Activated CD4-positive, alpha-beta memory T cell treated with anti-CD3 and anti-CD28 coated beads for 36 hours (primary cell): ENCODE measurements at regions of chr1 and their contacts with region 1.

Region 1: DNA sequence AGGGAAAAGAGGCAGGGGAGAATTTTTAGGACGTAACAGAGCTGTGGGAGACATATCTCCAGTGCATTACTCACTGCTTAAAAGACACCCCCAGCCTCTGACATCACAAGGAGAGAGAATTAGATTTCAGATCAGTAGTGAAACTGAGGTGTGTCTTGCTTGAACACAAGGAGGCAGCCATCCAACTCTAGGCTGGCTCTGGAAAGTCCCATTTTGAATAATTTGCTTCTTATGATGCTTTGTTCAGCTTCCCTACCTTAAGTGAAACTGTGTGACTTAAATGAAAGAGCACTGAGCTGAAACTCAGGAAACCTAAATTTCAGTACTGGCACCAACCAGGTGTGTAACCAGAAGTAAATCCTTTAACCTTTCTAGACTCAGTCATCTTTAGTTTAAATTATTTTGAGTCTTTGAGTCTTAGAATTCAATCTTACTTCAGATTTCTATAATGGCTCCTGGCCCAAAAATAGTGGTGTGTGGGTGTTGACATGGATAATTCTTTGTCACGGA is 251.6 kb upstream of the SGIP1 start:
- DNase-seq: peak; percentile 80
- H3K4me3 Mint-ChIP-seq: no peak overlapping the region
- H3K27ac Mint-ChIP-seq: peak overlapping the region; percentile 76
- H3K4me1 Mint-ChIP-seq: peaks cover 87% of the 10 kb centered on the region
- H3K27me3 Mint-ChIP-seq: no peaks in the 10 kb centered on the region

Region 2: GRCh38 chr1:66258404-66259105 is 23.8 kb before region 1 on chr1:
- CTCF ChIA-PET with region 1: interaction called, 11 read pairs
- POLR2A ChIA-PET with region 1: interaction called, 9 read pairs
- intact Hi-C with region 1: loop called (anchors 1 kb)
- DNase-seq: no peak
- H3K4me3 Mint-ChIP-seq: no peak overlapping the region
- H3K27ac Mint-ChIP-seq: peak overlapping the region; percentile 64
- H3K4me1 Mint-ChIP-seq: peaks cover 85% of the 10 kb centered on the region
- H3K27me3 Mint-ChIP-seq: no peaks in the 10 kb centered on the region

Region 3: GRCh38 chr1:66300972-66301451 is 18.6 kb after region 1 on chr1:
- CTCF ChIA-PET with region 1: no interaction called
- POLR2A ChIA-PET with region 1: interaction called, 6 read pairs
- intact Hi-C with region 1: loop called (anchors 1 kb)
- DNase-seq: peak; percentile 60
- H3K4me3 Mint-ChIP-seq: peak overlapping the region; percentile 65
- H3K27ac Mint-ChIP-seq: peak overlapping the region; percentile 77
- H3K4me1 Mint-ChIP-seq: peaks cover 50% of the 10 kb centered on the region
- H3K27me3 Mint-ChIP-seq: no peaks in the 10 kb centered on the region

Region 4: GRCh38 chr1:66380452-66381212 is 98.2 kb after region 1 on chr1:
- CTCF ChIA-PET with region 1: no interaction called
- POLR2A ChIA-PET with region 1: no interaction called
- intact Hi-C with region 1: no loop called
- DNase-seq: peak; percentile 62
- H3K4me3 Mint-ChIP-seq: no peak overlapping the region
- H3K27ac Mint-ChIP-seq: peak overlapping the region; percentile 1
- H3K4me1 Mint-ChIP-seq: peaks cover 53% of the 10 kb centered on the region
- H3K27me3 Mint-ChIP-seq: no peaks in the 10 kb centered on the region

Region 5: GRCh38 chr1:66402194-66402593 is 119.8 kb after region 1 on chr1:
- CTCF ChIA-PET with region 1: no interaction called
- POLR2A ChIA-PET with region 1: no interaction called
- intact Hi-C with region 1: loop called (anchors 1 kb)
- DNase-seq: no peak
- H3K4me3 Mint-ChIP-seq: no peak overlapping the region
- H3K27ac Mint-ChIP-seq: no peak overlapping the region
- H3K4me1 Mint-ChIP-seq: peaks cover 31% of the 10 kb centered on the region
- H3K27me3 Mint-ChIP-seq: no peaks in the 10 kb centered on the region

Region 6: DNA sequence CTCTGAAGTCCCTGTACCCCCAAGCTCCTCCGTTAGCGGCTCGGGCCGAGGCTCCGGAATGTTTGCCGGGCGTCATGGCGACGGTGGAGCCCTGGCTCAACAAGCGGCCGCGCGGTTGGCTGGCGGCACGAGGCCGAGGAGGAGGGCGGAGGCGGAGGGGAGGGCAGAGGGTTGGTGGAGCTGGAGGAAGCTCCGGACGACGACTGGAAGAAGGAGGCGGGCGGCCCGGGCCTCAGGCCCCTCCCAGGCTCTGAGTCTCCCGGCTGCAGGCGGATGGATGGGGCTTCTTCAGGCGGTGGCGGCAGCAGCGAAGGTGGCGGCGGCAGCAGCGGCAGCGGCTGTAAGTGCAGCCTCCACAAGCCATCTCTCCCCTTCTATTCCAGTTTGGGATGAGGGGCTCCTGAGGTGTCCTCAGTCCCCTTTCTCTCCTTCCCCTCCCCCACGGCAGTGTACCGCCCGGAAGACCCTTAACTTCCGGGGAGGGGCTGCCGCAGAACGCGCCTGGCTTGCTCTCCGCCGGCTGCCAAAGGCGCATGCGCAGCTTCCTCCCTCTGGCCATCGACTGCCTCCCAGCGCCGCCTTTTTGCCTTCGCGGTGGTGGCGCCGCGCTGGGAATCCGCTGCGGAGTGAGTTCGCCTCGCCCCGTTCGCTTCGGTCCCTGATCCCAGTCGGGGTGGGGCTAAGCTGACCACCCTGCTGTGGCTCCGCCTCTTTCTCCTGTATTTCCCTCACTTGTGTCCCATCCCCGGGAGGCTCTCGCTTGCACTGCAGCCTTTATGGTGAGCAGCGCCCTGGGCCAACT is 642.6 kb after region 1 on chr1 and contains the starts of genes DNAI4 and MIER1:
- CTCF ChIA-PET with region 1: no interaction called
- POLR2A ChIA-PET with region 1: no interaction called
- intact Hi-C with region 1: loop called (anchors 10 kb)
- DNase-seq: peak; percentile 99
- H3K4me3 Mint-ChIP-seq: peak within 1 kb of the TSS; percentile 97
- H3K27ac Mint-ChIP-seq: peak within 1 kb of the TSS; percentile 96
- H3K4me1 Mint-ChIP-seq: peaks cover 53% of the 10 kb centered on the region
- H3K27me3 Mint-ChIP-seq: no peaks in the 10 kb centered on the region
- total RNA-seq, gene DNAI4: 1.4 to 1.6 TPM
- total RNA-seq, gene MIER1: 54.7 to 58.8 TPM

Region 7: DNA sequence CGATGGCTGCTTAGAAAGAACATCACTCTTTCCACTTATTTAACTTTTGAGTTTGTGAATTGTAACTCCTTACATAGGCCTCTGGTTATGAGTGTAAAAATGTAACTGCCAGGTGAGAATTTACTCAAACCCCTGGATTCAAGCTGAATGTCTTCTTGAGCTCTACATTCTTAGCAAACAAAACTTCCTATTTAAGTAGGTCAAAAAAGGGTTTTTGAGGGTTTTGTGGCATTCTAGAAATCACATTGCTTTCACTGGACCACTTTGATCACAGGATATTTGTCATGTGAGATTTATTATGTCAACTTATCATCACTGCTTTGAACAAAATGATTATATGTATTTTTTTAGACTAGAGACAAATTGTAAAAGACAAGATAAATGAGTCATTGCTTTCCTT is 889.6 kb after region 1 on chr1:
- CTCF ChIA-PET with region 1: no interaction called
- POLR2A ChIA-PET with region 1: no interaction called
- intact Hi-C with region 1: loop called (anchors 5 kb)
- DNase-seq: no peak
- H3K4me3 Mint-ChIP-seq: peak overlapping the region; percentile 74
- H3K27ac Mint-ChIP-seq: peak overlapping the region; percentile 99
- H3K4me1 Mint-ChIP-seq: peaks cover 72% of the 10 kb centered on the region
- H3K27me3 Mint-ChIP-seq: peaks cover 5% of the 10 kb centered on the region